ENCODE measurements at regions of chr6 and their contacts with region 1.

Region 1: GRCh38 chr6:111709615-111710398 is 104.1 kb upstream of the TRAF3IP2 start:
- DNase-seq: peak; percentile 60
- H3K4me3 ChIP-seq: no peak overlapping the region
- H3K27ac ChIP-seq: no peak overlapping the region
- H3K4me1 ChIP-seq: no peaks in the 10 kb centered on the region
- H3K27me3 ChIP-seq: no peaks in the 10 kb centered on the region
- CTCF ChIP-seq: peak; percentile 26 to 92 (median 87)
- POLR2A ChIP-seq: no peak

Region 2: GRCh38 chr6:111503207-111503606 is 206.6 kb before region 1 on chr6:
- intact Hi-C with region 1: no loop called
- DNase-seq: no peak
- H3K4me3 ChIP-seq: no peak overlapping the region
- H3K27ac ChIP-seq: no peak overlapping the region
- H3K4me1 ChIP-seq: no peaks in the 10 kb centered on the region
- H3K27me3 ChIP-seq: no peaks in the 10 kb centered on the region
- CTCF ChIP-seq: no peak
- POLR2A ChIP-seq: no peak

Region 3: DNA sequence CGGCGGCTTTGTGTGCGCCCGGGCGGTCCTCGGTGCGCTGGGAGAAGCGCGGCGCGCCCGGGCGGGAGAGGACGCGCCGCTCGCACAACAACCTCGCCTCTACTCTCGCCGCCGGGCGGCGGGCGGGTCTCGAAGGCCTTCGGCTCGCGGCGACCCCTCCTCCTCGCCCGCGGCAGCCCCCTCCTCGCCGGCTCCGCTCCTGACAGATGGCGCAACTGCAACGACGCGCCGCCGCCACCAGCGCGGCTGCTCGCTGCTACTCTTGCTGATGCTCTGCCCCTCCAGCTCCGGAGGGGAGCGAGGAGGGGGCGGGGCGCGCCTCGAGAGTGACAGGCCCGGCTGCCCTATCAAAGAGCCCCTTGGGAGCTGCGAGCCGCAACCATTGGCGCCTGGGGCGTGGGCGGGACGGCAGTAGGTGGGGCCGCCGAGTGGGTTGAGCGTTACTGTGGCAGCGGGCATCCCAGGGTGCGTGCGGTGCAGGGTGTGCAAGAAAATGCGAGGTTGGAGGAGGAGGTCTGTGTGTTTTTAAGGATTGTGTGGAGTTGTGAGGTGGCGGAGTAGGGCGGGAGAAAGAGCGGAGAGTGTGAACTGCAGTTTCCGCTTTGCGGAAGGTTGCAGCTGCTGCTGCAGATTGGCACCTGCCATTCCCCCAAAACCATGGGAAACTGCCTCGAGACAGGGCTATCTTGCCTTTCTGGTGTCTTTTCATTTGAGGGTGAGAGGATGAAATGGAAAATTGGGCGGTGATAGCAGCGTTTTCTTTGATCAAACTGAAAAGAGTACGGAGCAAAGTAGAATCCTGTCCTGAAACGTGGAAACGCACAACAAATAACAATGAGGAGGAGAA is 163.6 kb after region 1 on chr6 and contains the start of gene FYN:
- intact Hi-C with region 1: loop called (anchors 5 kb)
- DNase-seq: peak; percentile 97
- H3K4me3 ChIP-seq: peak within 1 kb of the TSS; percentile 47 to 52
- H3K27ac ChIP-seq: peak within 1 kb of the TSS; percentile 56 to 58
- H3K4me1 ChIP-seq: peaks cover 3% of the 10 kb centered on the region
- H3K27me3 ChIP-seq: no peaks in the 10 kb centered on the region
- CTCF ChIP-seq: peak in 2 of 4 experiments; percentile 62 to 69
- POLR2A ChIP-seq: peak; percentile 74
- total RNA-seq, gene FYN: 13.7 to 103 TPM

Region 4: GRCh38 chr6:111997078-111997852 is 287.5 kb after region 1 on chr6:
- intact Hi-C with region 1: loop called (anchors 1 kb)
- DNase-seq: peak; percentile 75
- H3K4me3 ChIP-seq: no peak overlapping the region
- H3K27ac ChIP-seq: no peak overlapping the region
- H3K4me1 ChIP-seq: no peaks in the 10 kb centered on the region
- H3K27me3 ChIP-seq: no peaks in the 10 kb centered on the region
- CTCF ChIP-seq: peak; percentile 85 to 93 (median 92)
- POLR2A ChIP-seq: no peak

Region 5: DNA sequence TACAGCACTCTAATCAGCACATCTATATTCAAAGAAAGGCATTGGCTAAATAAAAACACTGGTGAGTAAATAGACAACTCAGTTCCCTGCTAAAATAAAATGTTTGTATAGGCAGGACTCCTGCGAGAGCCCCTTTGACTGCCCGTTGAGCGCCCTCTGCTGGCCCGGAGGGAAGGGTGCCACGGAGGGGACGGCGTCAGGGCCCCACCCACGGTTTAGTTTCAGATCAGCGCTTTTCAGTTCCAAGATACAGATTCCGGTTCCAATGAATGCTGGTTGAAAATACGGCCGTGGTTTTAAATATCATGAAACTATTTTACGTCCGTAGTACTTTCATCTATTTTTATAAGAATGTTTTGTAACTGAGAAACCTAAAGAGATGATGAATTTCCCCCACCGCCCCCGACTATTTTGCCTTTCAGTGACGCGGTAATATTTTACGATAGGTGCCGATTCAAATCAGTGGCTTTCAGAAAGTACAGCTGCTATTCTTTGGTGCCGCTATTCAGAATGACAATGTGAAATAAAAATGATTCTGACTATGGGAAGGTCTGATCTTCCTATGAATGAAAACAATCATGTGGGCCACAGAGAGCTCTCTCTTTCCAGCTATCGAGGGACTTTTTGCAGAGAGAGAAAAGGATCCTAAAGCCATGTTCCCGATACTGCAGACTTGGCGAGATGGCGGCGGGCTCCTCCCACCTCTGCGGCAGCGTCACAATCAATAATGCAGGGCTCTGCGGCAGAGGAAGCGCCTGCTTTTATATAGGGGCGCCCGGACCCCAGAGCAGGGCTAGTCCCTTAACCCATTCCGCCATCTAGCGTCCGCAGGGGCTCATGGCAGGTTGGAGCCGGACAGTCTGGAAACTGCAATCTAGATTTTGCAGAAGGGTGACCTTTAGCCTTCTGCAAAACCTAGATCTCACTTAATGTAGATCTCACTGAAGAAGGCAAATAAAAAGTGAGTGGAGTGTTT is 333.5 kb after region 1 on chr6:
- intact Hi-C with region 1: loop called (anchors 1 kb)
- DNase-seq: peak; percentile 73
- H3K4me3 ChIP-seq: peak overlapping the region; percentile 40 to 46
- H3K27ac ChIP-seq: peak overlapping the region; percentile 73 to 75
- H3K4me1 ChIP-seq: no peaks in the 10 kb centered on the region
- H3K27me3 ChIP-seq: no peaks in the 10 kb centered on the region
- CTCF ChIP-seq: peak; percentile 78 to 94 (median 85)
- POLR2A ChIP-seq: no peak

Measured in prostate gland (tissue), 2 donors.